ENCODE measurements at regions of chr9 and their contacts with region 1.

Region 1: DNA sequence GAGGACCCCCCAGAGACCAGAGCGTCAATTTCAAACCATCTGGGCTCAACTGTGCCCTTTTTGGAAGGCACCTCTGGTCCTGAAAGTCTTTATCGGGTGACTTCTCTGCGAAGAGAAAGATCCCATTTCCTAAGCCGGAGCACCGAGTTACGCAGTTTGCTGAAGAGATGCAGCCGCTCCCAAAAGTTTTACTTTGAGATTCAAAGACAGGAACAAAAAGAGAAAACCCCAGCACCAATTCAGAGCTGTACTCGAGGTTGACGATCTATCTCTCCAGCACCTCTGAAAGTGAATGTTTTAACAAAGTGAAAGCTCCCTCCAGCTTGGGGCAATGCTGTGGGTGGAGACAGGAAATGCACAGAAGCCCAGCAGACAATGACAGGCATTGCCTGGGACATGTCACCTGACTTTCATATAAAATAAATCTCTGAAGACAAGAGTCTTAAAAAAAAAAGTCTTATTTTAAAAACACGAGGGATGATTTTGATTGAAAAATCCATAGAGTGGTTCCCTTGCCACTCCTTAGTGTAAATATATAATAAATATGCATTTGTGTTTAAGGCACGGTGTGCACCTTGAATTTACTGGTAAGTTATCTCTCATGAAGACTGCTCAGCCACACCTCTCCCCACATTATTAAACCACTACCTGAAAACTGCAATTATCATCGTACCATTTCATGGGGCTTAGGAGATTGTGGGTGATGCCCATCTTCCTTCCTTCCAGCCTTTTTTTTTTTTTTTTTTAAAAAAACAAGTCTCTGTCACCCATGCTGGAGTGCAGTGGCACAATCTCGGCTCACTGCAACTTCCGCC is 79.9 kb downstream of the FNBP1 start:
- DNase-seq: peak; percentile 42 to 88 (median 79)
- ATAC-seq: peak; percentile 96 to 97
- H3K4me3 Mint-ChIP-seq: peak overlapping the region; percentile 85 to 93 (median 88)
- H3K27ac Mint-ChIP-seq: peak overlapping the region; percentile 95 to 99 (median 98)
- H3K4me1 Mint-ChIP-seq: peaks cover 41 to 76% (median 68%) of the 10 kb centered on the region in 4 donors
- H3K27me3 Mint-ChIP-seq: no peaks in the 10 kb centered on the region

Region 2: DNA sequence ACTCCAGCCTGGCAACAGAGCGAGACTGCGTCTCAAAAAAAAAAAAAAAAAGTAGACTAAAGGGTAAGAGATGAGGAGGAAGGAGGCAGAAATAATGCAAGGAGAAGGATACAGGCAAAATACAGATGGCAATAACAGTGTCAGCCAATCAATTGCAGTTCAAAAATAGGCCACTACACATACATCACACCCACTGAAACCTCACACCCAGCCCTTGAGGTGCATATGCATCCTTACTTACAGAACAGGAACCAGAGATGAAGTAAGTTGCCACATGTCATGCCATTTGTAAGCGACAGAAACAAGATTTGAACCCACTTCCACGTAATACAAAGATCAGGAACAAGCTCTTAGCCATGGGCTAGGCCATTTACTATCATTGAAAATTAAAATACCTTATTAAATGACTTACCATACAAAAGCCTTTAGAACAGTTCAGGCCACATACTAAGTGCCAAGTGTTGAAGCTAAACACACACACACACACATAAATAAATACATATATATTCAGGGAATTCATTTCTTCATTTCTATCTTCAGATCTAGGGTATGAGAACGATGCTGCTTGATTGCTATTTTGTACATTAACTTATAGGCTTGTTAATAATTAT is 18.5 kb before region 1 on chr9:
- POLR2A ChIA-PET with region 1: interaction called, 31 read pairs
- DNase-seq: peak in 9 of 10 donors; percentile 24 to 77 (median 61)
- ATAC-seq: peak; percentile 86 to 93
- H3K4me3 Mint-ChIP-seq: peak overlapping the region in 9 of 10 donors; percentile 26 to 75 (median 61)
- H3K27ac Mint-ChIP-seq: peak overlapping the region; percentile 75 to 94 (median 91)
- H3K4me1 Mint-ChIP-seq: peaks cover 23 to 64% (median 57%) of the 10 kb centered on the region in 4 donors
- H3K27me3 Mint-ChIP-seq: no peaks in the 10 kb centered on the region

Region 3: DNA sequence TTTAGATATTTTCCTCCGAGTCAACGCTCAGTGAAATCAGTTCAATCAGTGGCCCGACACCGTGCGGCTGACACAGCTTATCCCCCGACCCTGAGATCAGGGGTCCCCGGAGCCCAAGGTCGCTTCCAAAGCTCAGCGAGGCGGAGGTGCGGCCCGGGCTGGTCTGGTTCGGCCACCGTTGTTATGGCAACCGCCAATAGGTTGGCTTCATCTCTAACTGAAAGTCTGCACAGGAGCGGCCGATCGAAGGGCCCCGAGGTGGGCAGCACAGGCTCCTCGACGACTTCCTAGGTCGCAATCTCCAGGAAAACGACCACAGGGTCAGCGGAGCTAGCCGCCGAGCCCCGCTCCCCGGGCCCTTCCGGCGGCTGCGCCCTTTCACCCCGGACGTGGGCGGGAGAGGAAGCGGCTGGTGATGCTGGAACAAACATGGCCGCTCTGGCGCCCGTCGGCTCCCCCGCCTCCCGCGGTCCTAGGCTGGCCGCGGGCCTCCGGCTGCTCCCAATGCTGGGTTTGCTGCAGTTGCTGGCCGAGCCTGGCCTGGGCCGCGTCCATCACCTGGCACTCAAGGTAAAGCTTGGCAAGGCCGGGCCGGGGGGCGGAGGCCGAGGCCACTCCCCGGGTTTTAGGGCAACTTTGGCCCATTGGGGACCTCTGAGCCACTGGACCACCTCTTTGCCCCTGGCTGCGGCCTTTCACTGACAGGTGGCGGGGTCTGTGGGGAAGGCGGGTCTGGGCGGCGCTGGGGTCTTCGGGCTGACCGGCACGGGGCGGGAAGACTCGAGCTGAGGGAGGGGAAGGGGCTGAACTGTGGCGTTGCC is 90.6 kb after region 1 on chr9 and contains the start of gene GPR107:
- POLR2A ChIA-PET with region 1: interaction called, 11 read pairs
- DNase-seq: peak; percentile 52 to 85 (median 71)
- ATAC-seq: peak; percentile 94
- H3K4me3 Mint-ChIP-seq: peak within 1 kb of the TSS; percentile 89 to 95 (median 92)
- H3K27ac Mint-ChIP-seq: peak within 1 kb of the TSS; percentile 91 to 96 (median 94)
- H3K4me1 Mint-ChIP-seq: peaks cover 8 to 52% (median 34%) of the 10 kb centered on the region in 4 donors
- H3K27me3 Mint-ChIP-seq: no peaks in the 10 kb centered on the region
- polyA plus RNA-seq, gene GPR107: 1.4 to 3.2 (median 2.2) TPM